ENCODE measurements at regions of chr15 and their contacts with region 1.

Region 1: DNA sequence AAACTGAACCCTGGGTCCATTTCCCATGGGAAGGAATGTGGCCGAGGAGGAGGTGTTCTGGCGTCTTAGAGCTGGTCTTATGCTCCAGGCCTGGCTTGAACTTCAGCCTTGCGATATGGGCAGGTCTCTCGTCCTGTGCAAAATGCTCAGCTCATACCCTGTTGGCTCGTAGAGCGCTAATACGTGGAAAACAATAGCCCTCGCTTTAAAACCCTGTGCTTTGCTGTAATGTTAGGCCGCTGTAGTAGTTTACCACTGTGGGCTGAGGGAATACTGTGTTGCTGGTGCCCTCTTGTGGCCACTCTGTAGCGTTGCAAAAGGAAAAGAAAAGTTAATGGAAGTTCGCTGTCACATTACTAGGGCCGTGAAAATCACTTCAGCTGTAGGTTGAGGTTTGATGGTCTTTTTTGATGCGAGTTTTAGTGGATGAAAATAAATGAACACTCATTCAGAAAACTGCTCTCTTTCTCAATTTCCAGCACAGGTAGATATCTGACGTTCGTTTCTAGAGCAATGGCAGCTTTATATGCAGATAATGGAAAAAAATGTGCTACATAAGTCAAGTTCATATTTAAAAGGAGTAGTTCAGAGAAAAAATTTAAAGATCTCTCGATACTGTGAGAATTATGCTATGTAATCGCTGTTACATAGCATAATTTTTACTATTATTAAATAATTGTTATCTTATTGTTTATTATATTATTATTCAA is 92.9 kb downstream of the MCTP2 start:
- DNase-seq: peak in 8 of 9 experiments; percentile 37 to 84 (median 60)
- ATAC-seq: peak; percentile 83
- H3K4me3 ChIP-seq: no peak overlapping the region
- H3K4me3 Mint-ChIP-seq: peak overlapping the region; percentile 32
- H3K27ac ChIP-seq: no peak overlapping the region
- H3K27ac Mint-ChIP-seq: peak overlapping the region; percentile 25
- H3K4me1 ChIP-seq: no peaks in the 10 kb centered on the region
- H3K4me1 Mint-ChIP-seq: peaks cover 15% of the 10 kb centered on the region
- H3K27me3 ChIP-seq: no peaks in the 10 kb centered on the region
- H3K27me3 Mint-ChIP-seq: no peaks in the 10 kb centered on the region
- CTCF ChIP-seq: peak; percentile 90

Region 2: DNA sequence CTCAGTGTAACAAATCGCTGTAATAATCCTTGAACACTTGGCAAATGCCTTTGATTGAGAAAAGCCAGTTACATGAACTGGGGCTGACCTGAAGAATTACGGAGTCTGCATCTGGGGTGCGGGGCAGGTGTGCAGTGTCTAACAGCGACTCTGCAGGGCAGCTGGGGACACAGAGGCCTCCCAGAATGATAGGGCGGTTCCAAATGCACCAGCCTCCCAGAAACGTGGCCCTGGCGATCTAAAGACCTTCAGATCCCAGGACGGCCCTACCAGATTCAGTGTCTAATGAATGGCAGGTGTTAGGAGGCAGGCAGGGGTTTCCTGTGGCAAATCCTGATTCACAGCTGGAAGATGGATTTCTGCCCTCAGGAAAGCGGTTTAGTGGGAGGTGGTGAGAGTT is 1134.7 kb before region 1 on chr15:
- CTCF ChIA-PET with region 1: no interaction called
- POLR2A ChIA-PET with region 1: no interaction called
- intact Hi-C with region 1: no loop called
- DNase-seq: no peak
- ATAC-seq: no peak
- H3K4me3 ChIP-seq: no peak overlapping the region
- H3K4me3 Mint-ChIP-seq: no peak overlapping the region
- H3K27ac ChIP-seq: no peak overlapping the region
- H3K27ac Mint-ChIP-seq: no peak overlapping the region
- H3K4me1 ChIP-seq: no peaks in the 10 kb centered on the region
- H3K4me1 Mint-ChIP-seq: no peaks in the 10 kb centered on the region
- H3K27me3 ChIP-seq: no peaks in the 10 kb centered on the region
- H3K27me3 Mint-ChIP-seq: peaks cover 7% of the 10 kb centered on the region
- CTCF ChIP-seq: no peak

Region 3: DNA sequence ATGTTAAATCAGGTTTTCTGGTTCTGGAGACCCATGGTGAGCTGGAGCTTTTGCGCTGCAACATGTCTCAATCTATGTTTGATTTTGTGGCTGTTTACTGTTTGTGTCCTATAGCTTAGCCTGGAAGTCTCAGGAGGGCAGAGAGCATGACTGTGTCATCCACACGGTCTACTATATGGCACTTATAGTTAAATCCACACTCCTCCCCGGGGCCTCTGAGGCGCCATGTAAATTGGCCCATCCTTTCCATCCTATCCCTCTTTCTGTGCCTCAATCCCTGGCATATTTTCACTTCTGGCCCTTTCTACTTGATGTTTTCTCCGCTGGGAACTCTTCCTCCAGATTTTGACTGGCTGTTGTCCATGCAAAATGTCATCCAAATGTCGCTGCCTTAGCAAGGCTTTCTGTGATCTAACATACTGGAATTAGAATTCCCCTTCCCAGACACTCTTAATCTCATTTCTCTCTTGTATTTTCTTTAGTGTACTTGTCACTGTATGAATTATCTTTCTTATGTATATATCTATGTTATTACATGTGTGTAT is 674.5 kb before region 1 on chr15:
- CTCF ChIA-PET with region 1: no interaction called
- POLR2A ChIA-PET with region 1: no interaction called
- intact Hi-C with region 1: no loop called
- DNase-seq: no peak
- ATAC-seq: no peak
- H3K4me3 ChIP-seq: no peak overlapping the region
- H3K4me3 Mint-ChIP-seq: no peak overlapping the region
- H3K27ac ChIP-seq: no peak overlapping the region
- H3K27ac Mint-ChIP-seq: no peak overlapping the region
- H3K4me1 ChIP-seq: no peaks in the 10 kb centered on the region
- H3K4me1 Mint-ChIP-seq: no peaks in the 10 kb centered on the region
- H3K27me3 ChIP-seq: no peaks in the 10 kb centered on the region
- H3K27me3 Mint-ChIP-seq: peaks cover 2% of the 10 kb centered on the region
- CTCF ChIP-seq: no peak

Region 4: GRCh38 chr15:93997084-93997918 is 327.0 kb before region 1 on chr15:
- CTCF ChIA-PET with region 1: no interaction called
- POLR2A ChIA-PET with region 1: no interaction called
- intact Hi-C with region 1: loop called (anchors 5 to 10 kb)
- DNase-seq: peak in 1 of 9 experiments; percentile 14
- ATAC-seq: no peak
- H3K4me3 ChIP-seq: no peak overlapping the region
- H3K4me3 Mint-ChIP-seq: no peak overlapping the region
- H3K27ac ChIP-seq: no peak overlapping the region
- H3K27ac Mint-ChIP-seq: no peak overlapping the region
- H3K4me1 ChIP-seq: no peaks in the 10 kb centered on the region
- H3K4me1 Mint-ChIP-seq: no peaks in the 10 kb centered on the region
- H3K27me3 ChIP-seq: peaks cover 0 to 3% of the 10 kb centered on the region in 2 experiments
- H3K27me3 Mint-ChIP-seq: no peaks in the 10 kb centered on the region
- CTCF ChIP-seq: peak; percentile 51

Region 5: GRCh38 chr15:94230956-94231722 is 93.1 kb before region 1 on chr15 and contains the start of gene MCTP2:
- CTCF ChIA-PET with region 1: interaction called, 12 read pairs
- POLR2A ChIA-PET with region 1: no interaction called
- intact Hi-C with region 1: loop called (anchors 2 to 5 kb)
- DNase-seq: peak; percentile 66 to 94 (median 82)
- ATAC-seq: peak; percentile 85
- H3K4me3 ChIP-seq: peak within 1 kb of the TSS; percentile 67 to 69
- H3K4me3 Mint-ChIP-seq: peak within 1 kb of the TSS; percentile 95
- H3K27ac ChIP-seq: peak within 1 kb of the TSS; percentile 80 to 85
- H3K27ac Mint-ChIP-seq: peak within 1 kb of the TSS; percentile 95
- H3K4me1 ChIP-seq: peaks cover 32% of the 10 kb centered on the region
- H3K4me1 Mint-ChIP-seq: peaks cover 53% of the 10 kb centered on the region
- H3K27me3 ChIP-seq: no peaks in the 10 kb centered on the region
- H3K27me3 Mint-ChIP-seq: no peaks in the 10 kb centered on the region
- CTCF ChIP-seq: no peak
- total RNA-seq, gene MCTP2: 11.2 to 16.5 TPM

Region 6: GRCh38 chr15:94335616-94336015 is 11.3 kb after region 1 on chr15:
- CTCF ChIA-PET with region 1: interaction called, 32 read pairs
- POLR2A ChIA-PET with region 1: interaction called, 5 read pairs
- intact Hi-C with region 1: no loop called
- DNase-seq: no peak
- ATAC-seq: no peak
- H3K4me3 ChIP-seq: no peak overlapping the region
- H3K4me3 Mint-ChIP-seq: no peak overlapping the region
- H3K27ac ChIP-seq: no peak overlapping the region
- H3K27ac Mint-ChIP-seq: no peak overlapping the region
- H3K4me1 ChIP-seq: no peaks in the 10 kb centered on the region
- H3K4me1 Mint-ChIP-seq: no peaks in the 10 kb centered on the region
- H3K27me3 ChIP-seq: no peaks in the 10 kb centered on the region
- H3K27me3 Mint-ChIP-seq: no peaks in the 10 kb centered on the region
- CTCF ChIP-seq: no peak

Region 7: DNA sequence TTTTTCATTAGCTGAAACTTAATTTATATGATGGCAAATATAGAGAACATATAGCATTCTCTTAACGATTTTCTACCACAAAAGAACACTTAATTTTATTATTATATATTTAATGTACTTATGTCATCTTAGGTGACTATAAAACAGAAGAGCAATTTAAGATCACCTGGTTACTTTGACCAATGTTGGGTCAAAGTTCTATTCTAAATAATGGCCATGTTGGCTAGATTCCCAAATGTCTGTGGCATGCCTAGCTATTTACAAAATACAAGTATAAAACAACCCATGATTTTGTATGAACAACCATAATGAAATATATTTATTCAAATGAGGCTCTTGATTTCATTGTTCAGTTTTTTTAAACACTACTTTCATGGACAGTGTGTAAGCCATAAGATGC is 108.0 kb after region 1 on chr15:
- CTCF ChIA-PET with region 1: no interaction called
- POLR2A ChIA-PET with region 1: no interaction called
- intact Hi-C with region 1: no loop called
- DNase-seq: no peak
- ATAC-seq: no peak
- H3K4me3 ChIP-seq: no peak overlapping the region
- H3K4me3 Mint-ChIP-seq: no peak overlapping the region
- H3K27ac ChIP-seq: no peak overlapping the region
- H3K27ac Mint-ChIP-seq: no peak overlapping the region
- H3K4me1 ChIP-seq: no peaks in the 10 kb centered on the region
- H3K4me1 Mint-ChIP-seq: no peaks in the 10 kb centered on the region
- H3K27me3 ChIP-seq: no peaks in the 10 kb centered on the region
- H3K27me3 Mint-ChIP-seq: no peaks in the 10 kb centered on the region
- CTCF ChIP-seq: no peak